ENCODE measurements at regions of chr2 and their contacts with region 1.

Region 1: GRCh38 chr2:135797497-135798274 is 39.3 kb downstream of the LCT start:
- DNase-seq: peak; percentile 71 to 90 (median 81)
- H3K4me3 ChIP-seq: no peak overlapping the region
- H3K27ac ChIP-seq: no peak overlapping the region
- H3K4me1 ChIP-seq: no peaks in the 10 kb centered on the region
- H3K27me3 ChIP-seq: no peaks in the 10 kb centered on the region
- CTCF ChIP-seq: peak; percentile 79 to 90 (median 86)
- POLR2A ChIP-seq: no peak

Region 2: DNA sequence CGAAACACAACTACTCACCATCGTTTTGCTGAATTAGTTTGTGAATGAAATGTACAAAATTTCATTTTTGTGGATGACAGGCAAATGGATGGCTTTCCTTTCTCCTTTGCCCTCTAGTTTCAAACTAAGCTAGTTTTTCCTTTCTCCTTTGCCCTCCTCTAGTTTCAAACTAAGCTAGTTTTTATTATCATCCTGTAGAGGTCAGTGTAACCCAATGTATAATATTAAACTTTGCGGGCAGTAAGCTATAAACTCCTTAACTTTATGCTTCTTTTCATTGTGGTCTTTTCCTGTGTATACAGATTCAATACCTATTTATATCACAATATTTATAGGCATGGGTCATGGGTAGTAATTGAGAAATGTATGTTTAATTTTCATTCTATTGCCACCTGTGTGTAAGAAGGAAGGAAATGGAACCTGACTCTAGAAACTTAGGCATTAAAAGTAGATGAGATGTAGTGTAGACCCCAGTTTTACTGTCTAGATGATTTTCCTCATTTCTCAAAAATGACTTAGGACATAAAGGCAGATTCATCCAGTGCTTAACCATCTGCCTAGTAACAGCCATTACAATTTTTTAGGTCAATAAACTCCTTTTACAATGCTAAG is 808.6 kb before region 1 on chr2:
- intact Hi-C with region 1: loop called in 1 of 2 experiments (anchors 5 kb)
- DNase-seq: no peak
- H3K4me3 ChIP-seq: no peak overlapping the region
- H3K27ac ChIP-seq: no peak overlapping the region
- H3K4me1 ChIP-seq: no peaks in the 10 kb centered on the region
- H3K27me3 ChIP-seq: no peaks in the 10 kb centered on the region
- CTCF ChIP-seq: peak; percentile 11 to 57 (median 39)
- POLR2A ChIP-seq: no peak

Region 3: DNA sequence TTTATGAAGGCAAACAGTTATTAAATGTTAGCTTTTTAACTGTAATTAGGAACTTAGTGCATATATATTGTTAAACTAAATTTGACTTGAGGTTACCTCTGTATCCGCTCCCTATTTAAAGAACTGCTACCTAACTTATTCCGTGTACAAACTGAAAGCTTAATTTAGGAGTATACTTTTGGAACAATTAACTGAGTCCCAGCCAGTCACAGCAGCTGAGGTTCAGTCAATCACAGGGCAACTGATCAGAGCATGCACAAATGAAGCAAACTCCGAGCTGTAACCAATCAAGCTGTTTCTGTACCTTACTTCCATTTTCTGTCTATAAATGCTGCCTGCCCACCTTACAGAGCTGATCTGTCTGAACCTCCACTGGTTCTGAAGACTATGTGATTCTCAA is 684.4 kb before region 1 on chr2:
- intact Hi-C with region 1: no loop called
- DNase-seq: no peak
- H3K4me3 ChIP-seq: no peak overlapping the region
- H3K27ac ChIP-seq: no peak overlapping the region
- H3K4me1 ChIP-seq: no peaks in the 10 kb centered on the region
- H3K27me3 ChIP-seq: no peaks in the 10 kb centered on the region
- CTCF ChIP-seq: no peak
- POLR2A ChIP-seq: no peak

Region 4: GRCh38 chr2:136332436-136333095 is 534.9 kb after region 1 on chr2:
- intact Hi-C with region 1: no loop called
- DNase-seq: no peak
- H3K4me3 ChIP-seq: no peak overlapping the region
- H3K27ac ChIP-seq: no peak overlapping the region
- H3K4me1 ChIP-seq: peaks cover 4 to 7% of the 10 kb centered on the region in 2 donors
- H3K27me3 ChIP-seq: no peaks in the 10 kb centered on the region
- CTCF ChIP-seq: no peak
- POLR2A ChIP-seq: no peak

Measured in adrenal gland (tissue), 19 donors.